Activated CD4-positive, alpha-beta T cell treated with anti-CD3 and anti-CD28 coated beads, Interleukin-2, amount 10 ng/mL, durations not matched to agents 7 days and 5 days (primary cell): ENCODE measurements at regions of chr1 and their contacts with region 1.

Region 1: DNA sequence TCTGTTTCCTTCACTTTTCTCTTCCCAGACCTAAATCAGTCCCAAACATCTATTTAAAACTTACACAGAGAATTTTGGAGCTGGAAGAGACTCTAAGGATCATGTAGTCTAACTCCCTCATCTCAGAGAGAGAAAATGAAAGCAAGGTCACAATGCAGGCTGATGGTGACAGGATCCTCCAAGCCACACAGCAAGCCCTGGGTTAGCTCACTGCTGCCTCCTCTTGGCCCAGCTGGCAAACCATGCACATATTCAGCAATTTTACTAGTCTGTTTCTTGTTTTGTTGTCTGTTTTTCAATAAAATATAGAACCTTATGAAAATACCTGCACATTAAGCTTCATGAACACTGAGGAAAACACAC is 27.7 kb upstream of the LY9 start:
- DNase-seq: peak; percentile 92
- H3K4me3 Mint-ChIP-seq: peak overlapping the region; percentile 72
- H3K27ac Mint-ChIP-seq: peak overlapping the region; percentile 97
- H3K4me1 Mint-ChIP-seq: peaks cover 38% of the 10 kb centered on the region
- H3K27me3 Mint-ChIP-seq: no peaks in the 10 kb centered on the region

Region 2: GRCh38 chr1:160651433-160652064 is 116.7 kb before region 1 on chr1:
- CTCF ChIA-PET with region 1: no interaction called
- POLR2A ChIA-PET with region 1: no interaction called
- DNase-seq: no peak
- H3K4me3 Mint-ChIP-seq: no peak overlapping the region
- H3K27ac Mint-ChIP-seq: no peak overlapping the region
- H3K4me1 Mint-ChIP-seq: peaks cover 69% of the 10 kb centered on the region
- H3K27me3 Mint-ChIP-seq: no peaks in the 10 kb centered on the region

Region 3: GRCh38 chr1:160675641-160676410 is 92.5 kb before region 1 on chr1:
- CTCF ChIA-PET with region 1: interaction called, 49 read pairs
- POLR2A ChIA-PET with region 1: no interaction called
- DNase-seq: peak; percentile 79
- H3K4me3 Mint-ChIP-seq: peak overlapping the region; percentile 28
- H3K27ac Mint-ChIP-seq: no peak overlapping the region
- H3K4me1 Mint-ChIP-seq: peaks cover 28% of the 10 kb centered on the region
- H3K27me3 Mint-ChIP-seq: no peaks in the 10 kb centered on the region

Region 4: DNA sequence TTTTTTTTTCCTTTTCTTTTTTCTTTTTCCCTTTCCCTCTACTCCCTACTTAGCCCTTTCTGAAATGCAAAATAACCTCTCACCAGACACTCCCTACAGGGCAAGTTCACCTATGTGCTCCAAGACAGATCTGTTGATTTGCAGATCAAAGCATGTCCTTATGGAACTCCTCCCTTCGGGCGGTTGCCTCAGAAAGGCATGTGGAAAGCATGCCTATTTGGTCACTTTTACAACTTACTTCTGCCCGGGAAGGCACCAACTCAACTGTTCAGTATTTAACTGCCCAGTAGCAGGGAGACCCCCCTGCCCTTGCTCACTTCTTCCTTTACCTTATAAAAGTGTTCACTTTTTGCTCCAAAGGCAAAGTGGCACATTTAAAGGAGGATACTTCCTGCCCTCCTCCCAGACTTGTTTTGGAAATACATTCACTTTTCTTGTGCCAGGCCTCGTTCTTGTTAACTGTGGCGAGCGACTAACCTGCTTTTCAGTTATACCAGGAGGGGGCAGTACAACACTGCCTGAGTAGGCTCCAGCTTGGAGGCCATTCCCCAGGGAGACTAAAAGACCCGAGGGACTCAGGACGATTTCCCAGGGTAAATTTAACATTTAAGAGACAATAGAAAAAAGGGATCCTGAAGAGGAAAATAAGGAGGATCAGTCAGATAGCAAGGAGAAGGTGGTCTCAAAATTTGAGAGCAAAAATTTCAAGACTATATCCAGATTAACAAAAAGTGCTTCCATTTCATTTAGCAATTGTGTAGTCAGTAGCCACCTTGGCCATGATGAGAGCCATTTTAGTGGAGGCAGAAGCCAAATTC is 41.6 kb before region 1 on chr1:
- CTCF ChIA-PET with region 1: interaction called, 102 read pairs
- POLR2A ChIA-PET with region 1: no interaction called
- DNase-seq: peak; percentile 79
- H3K4me3 Mint-ChIP-seq: no peak overlapping the region
- H3K27ac Mint-ChIP-seq: no peak overlapping the region
- H3K4me1 Mint-ChIP-seq: peaks cover 24% of the 10 kb centered on the region
- H3K27me3 Mint-ChIP-seq: no peaks in the 10 kb centered on the region

Region 5: DNA sequence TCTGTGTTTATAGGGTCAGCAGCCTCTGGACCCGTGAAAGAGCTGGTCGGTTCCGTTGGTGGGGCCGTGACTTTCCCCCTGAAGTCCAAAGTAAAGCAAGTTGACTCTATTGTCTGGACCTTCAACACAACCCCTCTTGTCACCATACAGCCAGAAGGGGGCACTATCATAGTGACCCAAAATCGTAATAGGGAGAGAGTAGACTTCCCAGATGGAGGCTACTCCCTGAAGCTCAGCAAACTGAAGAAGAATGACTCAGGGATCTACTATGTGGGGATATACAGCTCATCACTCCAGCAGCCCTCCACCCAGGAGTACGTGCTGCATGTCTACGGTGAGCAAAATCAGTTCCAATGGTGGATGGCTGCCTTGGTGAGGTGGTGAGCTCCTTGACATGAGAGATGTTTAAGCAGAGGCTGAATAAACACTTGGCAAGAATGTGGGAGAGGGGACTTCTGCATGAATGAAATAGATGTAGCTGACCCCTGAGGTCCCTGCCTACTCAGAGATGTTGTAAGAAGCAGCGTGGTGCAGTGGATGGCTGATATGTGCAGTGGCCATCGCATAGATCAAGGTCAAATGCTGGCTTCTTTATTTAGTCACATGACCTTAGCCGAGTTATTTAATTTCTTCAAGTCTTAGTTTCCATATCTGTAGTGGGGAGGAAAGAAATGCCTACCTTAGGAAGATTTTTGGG is 19.9 kb before region 1 on chr1:
- CTCF ChIA-PET with region 1: interaction called, 25 read pairs
- POLR2A ChIA-PET with region 1: no interaction called
- DNase-seq: no peak
- H3K4me3 Mint-ChIP-seq: no peak overlapping the region
- H3K27ac Mint-ChIP-seq: no peak overlapping the region
- H3K4me1 Mint-ChIP-seq: peaks cover 84% of the 10 kb centered on the region
- H3K27me3 Mint-ChIP-seq: no peaks in the 10 kb centered on the region

Region 6: GRCh38 chr1:160795951-160796383 is 27.7 kb after region 1 on chr1 and contains the start of gene LY9:
- CTCF ChIA-PET with region 1: interaction called, 13 read pairs
- POLR2A ChIA-PET with region 1: no interaction called
- DNase-seq: peak; percentile 91
- H3K4me3 Mint-ChIP-seq: peak within 1 kb of the TSS; percentile 86
- H3K27ac Mint-ChIP-seq: peak within 1 kb of the TSS; percentile 92
- H3K4me1 Mint-ChIP-seq: peaks cover 61% of the 10 kb centered on the region
- H3K27me3 Mint-ChIP-seq: no peaks in the 10 kb centered on the region
- total RNA-seq, gene LY9: 45.9 to 49.0 TPM

Region 7: GRCh38 chr1:160907976-160908375 is 139.7 kb after region 1 on chr1:
- CTCF ChIA-PET with region 1: no interaction called
- POLR2A ChIA-PET with region 1: no interaction called
- DNase-seq: no peak
- H3K4me3 Mint-ChIP-seq: no peak overlapping the region
- H3K27ac Mint-ChIP-seq: no peak overlapping the region
- H3K4me1 Mint-ChIP-seq: no peaks in the 10 kb centered on the region
- H3K27me3 Mint-ChIP-seq: peaks cover 1% of the 10 kb centered on the region

Region 8: GRCh38 chr1:161021165-161021960 is 253.1 kb after region 1 on chr1:
- CTCF ChIA-PET with region 1: no interaction called
- POLR2A ChIA-PET with region 1: no interaction called
- DNase-seq: peak; percentile 88
- H3K4me3 Mint-ChIP-seq: peak overlapping the region; percentile 92
- H3K27ac Mint-ChIP-seq: peak overlapping the region; percentile 93
- H3K4me1 Mint-ChIP-seq: peaks cover 31% of the 10 kb centered on the region
- H3K27me3 Mint-ChIP-seq: peaks cover 2% of the 10 kb centered on the region